ENCODE measurements at regions of chr19 and their contacts with region 1.

Region 1: DNA sequence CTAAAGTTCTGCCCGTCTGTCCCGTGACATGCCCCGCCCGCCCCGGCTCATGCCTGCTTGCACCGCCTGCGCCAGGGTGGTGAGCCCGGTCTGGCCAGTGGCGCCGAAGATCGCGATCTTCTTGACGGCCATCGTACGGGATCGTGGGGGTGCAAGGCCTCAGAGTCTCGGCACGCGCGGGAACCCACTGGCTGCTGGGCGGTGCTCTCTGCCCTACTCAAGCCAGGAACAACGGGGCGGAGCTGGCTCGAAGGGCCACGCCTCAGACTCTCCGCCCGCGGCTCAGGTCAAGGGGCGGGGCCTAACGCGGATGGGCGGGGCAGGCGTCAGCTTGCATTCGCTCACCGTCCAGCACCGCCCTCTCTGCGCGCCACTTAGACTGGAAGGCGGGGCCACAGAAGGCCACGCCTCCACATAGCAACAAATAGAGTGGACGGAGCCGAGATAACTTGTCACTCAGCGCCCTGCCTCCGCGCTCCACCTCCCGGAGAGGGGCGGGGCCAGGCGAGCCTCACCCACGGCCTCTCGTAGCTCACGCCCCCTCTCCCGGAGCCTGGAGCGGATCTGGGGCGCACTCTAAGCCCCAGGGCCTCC is at the start of gene BLVRB:
- DNase-seq: peak; percentile 93
- H3K4me3 ChIP-seq: peak within 1 kb of the TSS; percentile 81
- CTCF ChIP-seq: no peak

Region 2: DNA sequence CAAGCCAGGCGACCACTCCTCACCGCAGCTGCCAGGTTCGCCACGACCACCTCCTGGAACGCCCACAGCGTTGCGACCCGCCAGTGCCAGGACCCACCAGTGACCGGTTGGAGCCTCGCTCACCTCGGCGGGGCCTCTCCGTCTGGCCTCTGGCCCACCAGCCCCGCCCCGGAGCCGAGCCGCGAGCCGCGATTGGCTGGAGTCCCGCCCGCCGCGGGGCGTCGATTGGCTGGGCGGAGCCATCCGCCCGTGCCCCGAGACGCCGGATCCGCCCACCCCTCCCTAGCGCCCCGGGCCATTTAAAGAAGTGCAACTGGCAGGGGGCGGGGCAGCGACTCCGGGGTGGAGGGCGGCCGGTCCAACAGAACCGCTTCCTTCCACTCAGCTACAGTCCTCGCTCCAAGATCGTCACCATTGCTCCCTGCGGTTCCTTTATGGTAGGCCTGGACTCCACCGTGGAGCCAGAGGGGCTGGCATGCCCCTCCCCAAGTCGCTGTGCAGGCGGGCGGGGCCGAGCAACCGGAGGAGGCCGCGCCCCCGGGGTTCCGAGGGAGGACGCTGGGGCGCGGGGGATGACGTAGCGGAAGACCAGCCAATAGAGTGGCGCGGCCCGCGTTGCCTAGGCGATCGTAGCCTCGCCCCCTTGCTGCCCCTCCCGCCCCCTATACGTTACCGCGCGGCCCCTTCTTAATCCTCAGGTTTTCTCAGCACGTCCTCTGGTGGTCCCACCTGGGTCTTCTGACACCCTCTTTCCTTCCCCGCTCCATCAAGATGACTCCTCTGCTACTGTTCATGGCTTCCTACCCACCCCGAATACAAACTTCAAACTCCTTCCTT is 21.2 kb before region 1 on chr19 and contains the start of gene SERTAD3:
- CTCF ChIA-PET with region 1: interaction called, 12 read pairs
- POLR2A ChIA-PET with region 1: interaction called, 7 read pairs
- DNase-seq: peak; percentile 44
- H3K4me3 ChIP-seq: peak within 1 kb of the TSS; percentile 98
- CTCF ChIP-seq: no peak

Region 3: GRCh38 chr19:40502081-40502480 is 36.4 kb after region 1 on chr19:
- CTCF ChIA-PET with region 1: interaction called, 11 read pairs
- POLR2A ChIA-PET with region 1: no interaction called
- DNase-seq: no peak
- H3K4me3 ChIP-seq: no peak overlapping the region
- CTCF ChIP-seq: no peak

Region 4: DNA sequence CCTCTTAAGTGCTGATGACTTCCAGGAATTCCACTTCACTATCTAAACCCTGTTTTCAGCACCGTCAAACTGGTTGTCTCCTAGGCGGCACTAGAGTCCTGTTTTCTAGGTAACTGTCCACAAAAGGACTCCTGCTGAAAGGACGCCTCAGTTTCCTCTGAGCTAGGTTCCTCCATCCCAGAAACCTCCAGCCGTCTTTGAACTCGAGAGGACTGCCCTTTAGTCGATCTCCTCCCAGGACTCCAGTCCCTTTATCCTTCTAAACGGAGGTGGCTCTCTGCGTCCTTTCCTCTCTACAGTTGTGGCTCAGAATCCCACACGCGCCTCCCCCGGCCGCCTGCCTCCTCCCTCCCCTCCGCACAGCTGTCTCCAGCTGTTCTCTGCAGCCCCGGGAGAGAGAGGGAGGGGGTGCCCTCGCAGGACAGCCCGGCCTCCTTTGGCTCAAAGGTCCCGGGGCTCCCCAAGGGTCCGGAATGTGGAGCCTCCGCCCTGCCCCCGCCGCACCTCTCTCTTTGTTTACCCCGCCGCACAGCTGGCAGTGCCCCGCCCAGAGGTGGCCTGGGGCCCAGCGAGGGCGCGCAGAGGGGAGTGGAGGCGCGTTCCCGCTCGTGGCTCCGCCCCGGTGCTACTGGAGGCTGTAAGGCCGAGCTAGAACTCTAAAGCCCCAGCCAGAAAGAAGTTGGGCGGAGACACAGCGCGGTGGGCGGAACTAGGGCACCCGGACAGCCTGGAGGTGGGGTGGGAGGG is 137.9 kb after region 1 on chr19:
- CTCF ChIA-PET with region 1: interaction called, 19 read pairs
- POLR2A ChIA-PET with region 1: interaction called, 4 read pairs
- DNase-seq: no peak
- H3K4me3 ChIP-seq: peak overlapping the region; percentile 53
- CTCF ChIP-seq: no peak

Measured in AG04449 (cell line).